Gastrocnemius medialis (tissue), 4 donors: ENCODE measurements at regions of chr13 and their contacts with region 1.

Region 1: GRCh38 chr13:28718543-28719226 is at the start of gene SLC46A3:
- DNase-seq: peak; percentile 98 to 99
- ATAC-seq: peak; percentile 90 to 92
- H3K4me3 ChIP-seq: peak within 1 kb of the TSS; percentile 68 to 88 (median 81)
- H3K27ac ChIP-seq: peak within 1 kb of the TSS; percentile 95 to 99 (median 96)
- H3K4me1 ChIP-seq: peaks cover 25 to 29% of the 10 kb centered on the region in 2 donors
- H3K27me3 ChIP-seq: no peaks in the 10 kb centered on the region
- CTCF ChIP-seq: peak in 2 of 5 experiments; percentile 25 to 35
- POLR2A ChIP-seq: peak; percentile 77 to 86
- total RNA-seq, gene SLC46A3: 6.9 to 18.0 (median 9.8) TPM

Region 2: GRCh38 chr13:28658796-28659620 is 59.7 kb before region 1 on chr13 and contains the start of gene POMP:
- in situ Hi-C with region 1: loop called in 2 of 4 experiments (anchors 10 kb)
- intact Hi-C with region 1: loop called (anchors 1 kb)
- DNase-seq: peak; percentile 86 to 90
- ATAC-seq: peak; percentile 95 to 97
- H3K4me3 ChIP-seq: peak within 1 kb of the TSS; percentile 77 to 92 (median 86)
- H3K27ac ChIP-seq: peak within 1 kb of the TSS; percentile 93 to 95 (median 95)
- H3K4me1 ChIP-seq: peaks cover 39 to 42% of the 10 kb centered on the region in 2 donors
- H3K27me3 ChIP-seq: no peaks in the 10 kb centered on the region
- CTCF ChIP-seq: peak in 1 of 5 experiments; percentile 14
- POLR2A ChIP-seq: peak; percentile 97 to 99
- total RNA-seq, gene POMP: 162 to 188 (median 176) TPM

Region 3: DNA sequence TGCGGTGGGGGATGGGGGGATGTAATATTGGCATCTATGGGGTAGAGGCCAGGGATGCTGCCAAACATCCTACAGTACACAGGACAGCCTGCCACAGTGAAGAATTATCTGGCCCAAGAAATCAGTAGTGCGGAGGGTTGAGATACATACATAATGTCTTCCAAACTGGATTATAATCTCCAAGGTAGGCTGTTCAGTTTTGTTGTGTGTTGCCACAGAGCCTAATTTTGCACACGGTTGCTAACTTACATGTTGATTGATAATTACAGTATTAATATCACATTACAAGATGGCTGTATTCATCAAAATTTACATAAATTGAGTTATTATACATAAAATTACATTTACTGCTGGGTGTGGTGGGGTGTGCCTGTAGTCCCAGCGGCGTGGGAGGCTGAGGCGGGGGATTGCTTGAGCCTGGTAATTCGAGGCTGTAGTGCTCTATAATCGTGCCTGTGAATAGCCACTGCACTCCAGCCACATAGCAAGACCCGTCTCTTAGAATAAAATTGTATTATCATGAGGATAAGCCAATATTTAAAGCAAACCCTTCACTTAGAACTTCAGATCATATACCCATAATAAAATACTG is 51.7 kb before region 1 on chr13:
- in situ Hi-C with region 1: loop called in 1 of 4 experiments (anchors 10 kb)
- intact Hi-C with region 1: no loop called
- DNase-seq: no peak
- ATAC-seq: no peak
- H3K4me3 ChIP-seq: no peak overlapping the region
- H3K27ac ChIP-seq: no peak overlapping the region
- H3K4me1 ChIP-seq: peaks cover 2 to 11% of the 10 kb centered on the region in 2 donors
- H3K27me3 ChIP-seq: no peaks in the 10 kb centered on the region
- CTCF ChIP-seq: no peak
- POLR2A ChIP-seq: no peak

Region 4: GRCh38 chr13:29595380-29596063 is 876.8 kb after region 1 on chr13 and contains the start of gene SLC7A1:
- in situ Hi-C with region 1: no loop called
- intact Hi-C with region 1: loop called (anchors 10 kb)
- DNase-seq: peak in 1 of 2 donors; percentile 24
- ATAC-seq: peak; percentile 72 to 81
- H3K4me3 ChIP-seq: peak within 1 kb of the TSS; percentile 54 to 74 (median 60)
- H3K27ac ChIP-seq: peak within 1 kb of the TSS; percentile 52 to 67 (median 66)
- H3K4me1 ChIP-seq: peaks cover 0 to 4% of the 10 kb centered on the region in 2 donors
- H3K27me3 ChIP-seq: peaks cover 0 to 17% (median 8%) of the 10 kb centered on the region in 3 donors
- CTCF ChIP-seq: no peak
- POLR2A ChIP-seq: peak; percentile 14 to 38
- total RNA-seq, gene SLC7A1: 1.6 to 4.6 (median 3.7) TPM